CD8-positive, alpha-beta T cell (primary cell): ENCODE measurements at regions of chr21 and their contacts with region 1.

Region 1: DNA sequence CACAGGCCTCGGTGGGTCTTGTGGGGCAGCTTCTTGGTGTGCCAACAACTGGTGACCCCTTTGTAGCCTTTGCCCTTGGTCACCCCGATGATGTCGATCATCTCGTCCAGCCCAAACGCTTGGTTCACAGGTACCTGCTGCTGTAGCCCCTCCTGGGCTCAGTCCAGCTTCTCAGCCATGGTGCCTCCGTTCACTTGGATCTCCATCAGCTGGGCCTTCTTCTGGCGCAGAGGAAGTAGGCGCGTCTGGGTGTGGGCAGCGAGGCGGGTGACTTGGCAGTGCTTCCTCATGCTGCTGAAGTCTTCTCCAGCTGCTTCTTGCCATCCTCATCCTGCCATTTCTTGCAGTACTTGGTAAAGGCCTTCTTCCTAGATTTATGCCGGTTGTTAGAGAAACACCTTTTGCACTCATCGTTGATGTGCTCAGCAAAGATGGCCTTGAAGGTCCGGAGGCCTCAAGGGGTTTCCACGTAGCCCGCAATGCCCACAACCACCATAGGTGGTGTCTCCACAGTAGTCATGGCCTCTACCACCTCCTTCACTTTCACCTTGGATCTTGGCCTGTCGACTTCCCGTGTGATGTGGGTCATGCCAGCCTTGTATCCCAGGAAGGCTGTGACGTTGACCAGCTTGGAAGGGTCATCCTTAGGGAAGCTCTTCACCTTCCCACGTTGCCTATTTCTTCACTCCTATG is 13.0 kb downstream of the DOP1B start:
- DNase-seq: no peak
- ATAC-seq: no peak
- H3K4me3 ChIP-seq: no peak overlapping the region
- H3K4me3 Mint-ChIP-seq: no peak overlapping the region
- H3K27ac ChIP-seq: no peak overlapping the region
- H3K27ac Mint-ChIP-seq: no peak overlapping the region
- H3K4me1 ChIP-seq: peaks cover 13% of the 10 kb centered on the region
- H3K4me1 Mint-ChIP-seq: peaks cover 7% of the 10 kb centered on the region
- H3K27me3 ChIP-seq: no peaks in the 10 kb centered on the region
- H3K27me3 Mint-ChIP-seq: no peaks in the 10 kb centered on the region
- CTCF ChIP-seq: no peak

Region 2: DNA sequence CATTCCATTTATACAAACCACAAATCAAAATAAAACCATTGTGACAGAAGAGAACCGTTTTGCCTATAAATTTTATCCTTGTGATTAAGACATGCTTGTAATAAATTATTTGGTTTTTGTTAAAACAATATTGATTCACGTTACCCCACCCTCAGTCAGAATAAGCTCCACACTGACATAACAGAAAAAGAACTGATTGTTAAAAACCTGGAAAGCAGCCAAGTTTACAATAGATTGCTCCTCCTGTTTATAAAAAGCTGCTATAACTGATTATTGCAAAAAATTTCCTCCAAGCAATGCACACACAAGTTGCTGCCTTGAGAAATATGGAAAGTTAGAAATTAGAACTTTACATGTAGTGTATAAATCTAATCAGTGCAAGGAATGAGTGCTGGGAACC is 372.7 kb before region 1 on chr21:
- CTCF ChIA-PET with region 1: no interaction called
- POLR2A ChIA-PET with region 1: no interaction called
- intact Hi-C with region 1: no loop called
- DNase-seq: no peak
- ATAC-seq: no peak
- H3K4me3 ChIP-seq: no peak overlapping the region
- H3K4me3 Mint-ChIP-seq: no peak overlapping the region
- H3K27ac ChIP-seq: no peak overlapping the region
- H3K27ac Mint-ChIP-seq: no peak overlapping the region
- H3K4me1 ChIP-seq: peaks cover 7% of the 10 kb centered on the region
- H3K4me1 Mint-ChIP-seq: peaks cover 11% of the 10 kb centered on the region
- H3K27me3 ChIP-seq: no peaks in the 10 kb centered on the region
- H3K27me3 Mint-ChIP-seq: peaks cover 5% of the 10 kb centered on the region
- CTCF ChIP-seq: no peak

Region 3: DNA sequence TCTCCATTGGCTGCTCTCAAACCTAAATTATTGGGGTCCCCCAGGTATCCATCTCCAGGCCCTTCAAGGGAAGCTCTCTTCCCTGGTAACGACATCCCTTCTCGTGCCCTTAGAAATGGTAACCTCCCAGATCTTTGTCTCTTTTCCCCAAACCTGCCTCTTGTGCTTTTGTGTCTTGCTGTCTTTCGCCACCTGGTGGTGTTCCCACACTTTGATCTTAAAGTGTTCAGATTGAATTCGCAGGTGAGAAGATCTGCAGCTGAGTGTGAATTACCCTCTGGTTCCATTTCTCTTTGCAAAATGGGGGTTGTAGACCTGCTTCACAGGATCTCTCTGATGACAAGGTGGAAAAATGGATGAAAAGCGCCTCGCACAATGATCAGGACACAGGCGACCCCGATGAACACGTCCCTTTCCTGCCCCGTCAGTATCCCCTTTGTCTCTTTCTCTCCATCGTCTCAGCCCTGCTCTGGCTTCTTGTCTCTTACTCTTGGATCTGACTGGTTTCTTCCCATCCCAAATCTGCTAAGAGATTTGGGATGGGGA is 40.1 kb after region 1 on chr21:
- CTCF ChIA-PET with region 1: interaction called, 10 read pairs
- POLR2A ChIA-PET with region 1: no interaction called
- intact Hi-C with region 1: no loop called
- DNase-seq: peak; percentile 2 to 70 (median 46)
- ATAC-seq: no peak
- H3K4me3 ChIP-seq: no peak overlapping the region
- H3K4me3 Mint-ChIP-seq: no peak overlapping the region
- H3K27ac ChIP-seq: no peak overlapping the region
- H3K27ac Mint-ChIP-seq: no peak overlapping the region
- H3K4me1 ChIP-seq: no peaks in the 10 kb centered on the region
- H3K4me1 Mint-ChIP-seq: peaks cover 4% of the 10 kb centered on the region
- H3K27me3 ChIP-seq: no peaks in the 10 kb centered on the region
- H3K27me3 Mint-ChIP-seq: no peaks in the 10 kb centered on the region
- CTCF ChIP-seq: peak; percentile 36